Activated B cell treated with CpG ODN at 0.5 μM for 24 hours (primary cell): ENCODE measurements at regions of chr7 and their contacts with region 1.

Region 1: DNA sequence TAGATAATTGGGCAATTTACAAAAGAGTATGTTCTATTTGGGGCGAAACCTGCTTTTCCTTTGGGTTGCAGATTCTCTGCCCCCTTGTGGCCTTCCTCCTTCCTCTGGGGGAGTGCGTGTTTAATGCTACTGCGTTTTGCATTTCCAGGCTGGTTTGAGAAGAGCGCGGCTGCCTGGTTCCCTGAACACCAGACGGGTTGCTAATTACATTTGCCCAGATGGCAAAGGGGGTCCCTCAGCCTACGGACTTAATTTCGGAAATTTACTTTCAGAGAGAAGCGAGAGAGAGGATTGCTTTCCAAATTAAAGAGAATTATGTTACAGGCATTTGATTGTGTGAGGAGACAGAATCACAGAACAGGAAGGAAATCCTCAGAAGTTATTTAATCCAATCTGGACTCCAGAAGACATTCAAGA is 91.9 kb upstream of the JAZF1 start:
- DNase-seq: peak; percentile 30
- ATAC-seq: peak; percentile 64
- H3K4me3 Mint-ChIP-seq: peak overlapping the region; percentile 79
- H3K27ac Mint-ChIP-seq: no peak overlapping the region
- H3K4me1 Mint-ChIP-seq: peaks cover 27% of the 10 kb centered on the region
- H3K27me3 Mint-ChIP-seq: no peaks in the 10 kb centered on the region
- CTCF ChIP-seq: no peak

Region 2: DNA sequence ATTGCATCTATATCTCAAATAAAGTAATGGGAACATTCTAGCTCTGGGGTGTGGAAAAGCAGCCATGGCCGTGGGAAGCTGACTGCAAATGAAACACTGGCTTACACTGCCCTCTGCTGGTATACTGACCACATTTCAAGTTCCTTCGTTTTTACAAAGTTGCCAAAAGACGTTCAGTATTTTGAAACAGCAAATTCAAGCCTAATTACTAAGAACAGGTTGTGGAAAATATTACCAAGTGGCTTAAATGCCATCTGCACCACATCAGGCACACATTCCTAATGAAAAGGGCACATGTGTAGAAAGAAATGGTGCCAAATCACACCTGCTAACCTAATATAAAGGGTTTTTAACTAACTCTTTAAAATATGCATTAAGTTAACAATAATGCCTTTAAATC is 175.8 kb before region 1 on chr7:
- CTCF ChIA-PET with region 1: interaction called, 3 read pairs
- POLR2A ChIA-PET with region 1: no interaction called
- intact Hi-C with region 1: loop called (anchors 1 kb)
- DNase-seq: no peak
- ATAC-seq: no peak
- H3K4me3 Mint-ChIP-seq: no peak overlapping the region
- H3K27ac Mint-ChIP-seq: no peak overlapping the region
- H3K4me1 Mint-ChIP-seq: peaks cover 40% of the 10 kb centered on the region
- H3K27me3 Mint-ChIP-seq: no peaks in the 10 kb centered on the region
- CTCF ChIP-seq: peak; percentile 50

Region 3: DNA sequence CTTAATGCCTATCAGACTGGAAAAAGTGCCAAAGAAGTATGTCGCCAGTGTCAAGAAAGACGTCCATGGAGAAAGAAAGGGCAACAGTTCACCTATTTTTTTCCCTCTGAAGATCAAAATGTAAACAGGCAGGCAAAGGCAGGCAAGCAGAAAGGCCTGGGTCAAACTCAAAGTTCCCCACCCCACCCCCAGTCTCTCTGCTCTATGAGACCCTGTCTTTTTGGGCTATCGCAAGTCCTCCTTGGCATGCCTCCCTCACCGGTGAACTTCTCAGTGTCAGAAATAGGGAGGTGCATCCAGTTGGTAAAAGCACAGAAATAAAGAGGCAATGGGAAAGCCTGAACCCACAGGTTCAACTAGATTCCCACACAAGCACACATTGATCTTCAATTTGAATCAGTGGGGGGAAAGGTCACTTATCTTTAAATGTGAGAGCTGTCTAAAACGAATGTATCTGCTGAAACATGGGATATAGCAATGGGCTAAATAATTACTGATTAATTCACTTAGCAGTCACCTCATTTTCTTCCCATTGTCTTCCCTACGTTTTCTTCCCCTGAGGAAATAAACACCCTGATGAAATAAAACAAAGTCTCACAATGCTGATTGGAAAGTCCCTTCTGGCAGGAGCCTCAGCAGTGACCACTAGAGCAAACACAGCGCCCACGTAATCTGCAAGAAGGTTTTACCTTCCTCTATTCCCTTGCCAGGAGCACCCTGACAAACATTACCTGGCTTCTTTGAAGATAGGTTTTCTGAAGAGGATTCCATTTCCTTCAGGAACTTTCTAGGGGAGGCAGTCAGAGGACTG is 123.0 kb before region 1 on chr7:
- CTCF ChIA-PET with region 1: no interaction called
- POLR2A ChIA-PET with region 1: interaction called, 4 read pairs
- intact Hi-C with region 1: loop called (anchors 1 kb)
- DNase-seq: no peak
- ATAC-seq: peak; percentile 61
- H3K4me3 Mint-ChIP-seq: peak overlapping the region; percentile 76
- H3K27ac Mint-ChIP-seq: peak overlapping the region; percentile 95
- H3K4me1 Mint-ChIP-seq: peaks cover 81% of the 10 kb centered on the region
- H3K27me3 Mint-ChIP-seq: no peaks in the 10 kb centered on the region
- CTCF ChIP-seq: no peak

Region 4: DNA sequence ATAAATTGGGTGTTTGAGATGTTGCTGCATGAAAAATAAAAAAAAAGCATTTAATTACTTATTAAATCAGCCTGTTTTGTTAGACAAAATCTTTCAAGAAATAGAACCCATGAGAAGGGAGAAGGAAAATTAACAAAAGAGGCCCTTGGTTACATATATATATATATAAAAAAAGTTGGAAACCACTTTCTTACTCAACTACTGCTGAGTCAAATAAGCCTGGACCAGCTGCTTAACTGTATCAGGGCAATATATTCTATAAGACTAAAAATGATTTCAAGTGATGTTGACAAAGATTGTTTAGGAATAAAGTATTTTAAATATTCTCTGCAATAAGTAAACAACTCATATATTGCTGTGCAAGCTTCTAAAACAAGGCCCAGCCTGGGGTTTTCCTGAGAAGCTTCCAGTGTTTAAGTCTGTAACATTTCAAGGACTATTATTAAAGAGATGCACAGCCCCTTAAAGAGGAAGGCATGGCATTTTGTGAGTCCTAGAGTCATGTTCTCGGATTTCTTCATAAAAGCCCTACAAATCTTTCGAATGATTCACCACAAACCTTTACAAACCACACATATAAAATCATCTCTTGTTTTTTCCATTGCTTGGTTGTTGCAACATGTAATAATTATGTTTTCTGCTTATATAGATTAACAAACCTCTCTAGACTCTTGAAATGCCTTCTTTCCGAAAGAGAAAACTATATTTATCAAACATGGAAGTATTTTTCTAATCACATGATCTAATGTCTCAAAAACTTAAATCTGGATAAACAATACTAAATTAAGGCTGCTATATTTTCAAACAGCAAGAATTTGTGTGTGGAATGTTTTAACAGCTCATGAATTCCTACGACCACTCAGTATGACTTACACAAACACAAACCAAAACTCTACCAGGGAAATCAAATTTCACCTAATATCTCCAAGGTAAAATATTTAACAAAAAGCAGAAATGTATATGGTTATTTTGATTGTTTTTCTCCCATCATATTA is 106.2 kb before region 1 on chr7:
- CTCF ChIA-PET with region 1: interaction called, 4 read pairs
- POLR2A ChIA-PET with region 1: no interaction called
- intact Hi-C with region 1: loop called (anchors 1 kb)
- DNase-seq: no peak
- ATAC-seq: no peak
- H3K4me3 Mint-ChIP-seq: peak overlapping the region; percentile 59
- H3K27ac Mint-ChIP-seq: peak overlapping the region; percentile 85
- H3K4me1 Mint-ChIP-seq: peaks cover 95% of the 10 kb centered on the region
- H3K27me3 Mint-ChIP-seq: no peaks in the 10 kb centered on the region
- CTCF ChIP-seq: no peak

Region 5: DNA sequence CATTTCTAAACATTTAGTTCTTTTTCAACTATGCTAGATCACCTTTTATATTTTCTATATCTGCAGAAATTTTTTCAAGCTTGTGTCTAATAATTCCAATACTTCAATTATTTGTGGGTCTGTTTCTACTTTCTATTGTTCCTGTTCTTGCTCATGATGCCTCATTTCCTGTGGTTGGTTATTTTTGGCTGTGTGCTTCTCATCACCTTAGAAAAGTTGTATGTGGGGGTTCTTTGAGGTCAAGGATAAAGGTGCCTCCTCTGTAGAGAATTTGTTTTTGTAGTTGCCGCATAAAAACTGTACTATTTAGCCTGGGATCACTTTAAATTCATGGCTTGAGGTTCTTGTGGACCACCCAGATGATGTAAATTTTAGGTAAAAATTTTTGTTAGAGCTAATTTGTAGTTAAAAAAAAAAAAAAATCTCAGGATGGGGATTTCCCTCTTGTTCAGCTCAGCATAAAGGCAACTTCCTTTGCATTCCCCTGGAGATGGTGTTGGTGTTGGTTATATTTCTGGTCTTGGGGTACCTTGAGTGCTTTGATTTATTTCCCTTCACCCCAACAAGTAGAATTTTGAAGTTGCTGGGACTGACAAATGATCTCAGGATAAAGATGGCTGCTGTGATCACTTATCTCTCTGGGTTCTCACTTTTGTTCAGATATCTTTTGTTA is 64.8 kb before region 1 on chr7:
- CTCF ChIA-PET with region 1: interaction called, 3 read pairs
- POLR2A ChIA-PET with region 1: interaction called, 9 read pairs
- intact Hi-C with region 1: loop called (anchors 2 kb)
- DNase-seq: no peak
- ATAC-seq: peak; percentile 78
- H3K4me3 Mint-ChIP-seq: peak overlapping the region; percentile 66
- H3K27ac Mint-ChIP-seq: peak overlapping the region; percentile 88
- H3K4me1 Mint-ChIP-seq: peaks cover 81% of the 10 kb centered on the region
- H3K27me3 Mint-ChIP-seq: no peaks in the 10 kb centered on the region
- CTCF ChIP-seq: no peak

Region 6: GRCh38 chr7:28661826-28662595 is 389.5 kb after region 1 on chr7:
- CTCF ChIA-PET with region 1: no interaction called
- POLR2A ChIA-PET with region 1: no interaction called
- intact Hi-C with region 1: no loop called
- DNase-seq: no peak
- ATAC-seq: no peak
- H3K4me3 Mint-ChIP-seq: no peak overlapping the region
- H3K27ac Mint-ChIP-seq: no peak overlapping the region
- H3K4me1 Mint-ChIP-seq: peaks cover 10% of the 10 kb centered on the region
- H3K27me3 Mint-ChIP-seq: peaks cover 6% of the 10 kb centered on the region
- CTCF ChIP-seq: no peak